SK-N-SH (cell line): ENCODE measurements at regions of chr5 and their contacts with region 1.

Region 1: DNA sequence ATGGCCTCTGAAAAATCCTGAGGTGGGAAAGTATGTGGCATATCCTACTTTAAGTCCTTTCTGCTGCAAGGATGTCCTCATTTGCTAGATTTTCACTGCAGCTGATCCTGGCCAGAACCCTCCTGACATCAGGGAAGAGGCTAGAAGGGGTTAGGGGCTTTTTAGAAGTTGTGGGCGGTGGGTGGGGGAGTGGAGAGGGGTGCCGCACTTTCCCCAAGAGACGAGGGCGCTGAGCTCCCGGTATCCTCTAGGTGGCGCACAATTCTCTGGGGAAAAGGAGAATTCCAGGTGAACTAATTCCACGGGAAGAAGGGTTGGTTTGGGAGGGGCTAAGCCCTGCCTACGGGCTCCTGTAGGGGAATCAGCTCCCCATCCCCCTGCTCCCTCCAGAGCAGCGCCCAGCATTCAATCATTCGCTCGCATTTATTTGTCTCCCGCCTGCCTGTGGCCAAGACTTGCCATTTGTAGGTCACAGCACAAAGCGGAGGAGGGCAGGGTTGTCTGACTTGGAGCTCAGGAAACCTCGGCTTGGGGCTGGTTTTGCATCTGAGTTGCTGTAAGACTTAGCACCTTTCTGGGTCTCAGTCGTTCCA is 42.9 kb upstream of the HAND1 start:
- DNase-seq: peak; percentile 48
- H3K4me3 ChIP-seq: no peak overlapping the region
- H3K27ac ChIP-seq: peak overlapping the region in 1 of 2 experiments; percentile 100; a peak in 2 of 4 replicates
- H3K4me1 ChIP-seq: peaks cover 0 to 83% of the 10 kb centered on the region in 2 experiments; a peak in 2 of 4 replicates
- H3K27me3 ChIP-seq: no peaks in the 10 kb centered on the region
- CTCF ChIP-seq: peak; percentile 77
- EP300 ChIP-seq: no peak
- RAD21 ChIP-seq: peak; percentile 70

Region 2: GRCh38 chr5:154087257-154087656 is 433.7 kb before region 1 on chr5:
- CTCF ChIA-PET with region 1: no interaction called
- POLR2A ChIA-PET with region 1: no interaction called
- DNase-seq: no peak
- H3K4me3 ChIP-seq: no peak overlapping the region
- H3K27ac ChIP-seq: no peak overlapping the region
- H3K4me1 ChIP-seq: peaks cover 0 to 18% of the 10 kb centered on the region in 2 experiments; a peak in 2 of 4 replicates
- H3K27me3 ChIP-seq: no peaks in the 10 kb centered on the region
- CTCF ChIP-seq: no peak
- EP300 ChIP-seq: no peak
- RAD21 ChIP-seq: no peak

Region 3: DNA sequence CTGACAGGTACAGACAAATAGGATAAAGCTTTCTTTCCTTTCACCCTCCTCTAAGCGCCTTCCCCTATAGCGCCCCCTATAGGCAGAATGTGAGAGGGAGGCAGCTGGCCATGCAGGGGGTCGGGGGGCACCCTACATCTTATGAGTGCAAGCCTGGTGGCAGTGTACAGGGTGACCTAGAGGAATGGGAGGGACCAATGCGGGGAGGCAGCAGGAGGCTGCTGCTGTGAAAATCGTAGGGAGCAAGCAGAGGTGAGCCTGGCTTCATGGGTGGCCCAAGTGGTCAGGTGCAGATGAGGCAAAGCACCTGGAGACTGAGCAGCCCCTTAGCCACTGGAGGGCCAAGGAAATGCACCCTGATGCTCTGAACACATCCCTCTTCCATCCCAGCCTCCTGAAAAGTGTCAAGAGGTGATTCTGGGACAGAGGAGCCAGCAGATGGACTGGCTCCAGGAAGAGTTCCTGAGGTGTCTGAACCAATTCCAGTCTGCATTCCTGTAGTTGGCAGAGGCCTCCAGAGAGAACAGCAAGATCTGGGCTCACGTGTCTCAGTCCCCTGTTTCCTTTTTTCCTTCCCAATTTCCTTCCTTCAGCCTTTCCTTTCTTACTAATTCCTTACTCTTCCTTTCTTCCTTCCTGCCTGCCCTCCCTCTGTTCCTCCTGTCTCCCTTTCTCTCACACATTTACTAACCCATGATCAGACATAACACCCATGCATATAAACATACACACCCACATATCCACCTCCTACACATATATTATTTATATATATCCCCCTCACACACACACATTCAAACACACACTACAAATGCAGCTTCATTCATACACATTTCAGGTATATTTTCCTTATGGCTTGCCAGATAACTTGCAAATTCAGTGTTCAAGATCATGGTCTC is 363.2 kb before region 1 on chr5:
- CTCF ChIA-PET with region 1: no interaction called
- POLR2A ChIA-PET with region 1: no interaction called
- DNase-seq: no peak
- H3K4me3 ChIP-seq: no peak overlapping the region; a peak in 1 of 4 replicates
- H3K27ac ChIP-seq: no peak overlapping the region
- H3K4me1 ChIP-seq: peaks cover 0 to 5% of the 10 kb centered on the region in 2 experiments; a peak in 1 of 4 replicates
- H3K27me3 ChIP-seq: no peaks in the 10 kb centered on the region
- CTCF ChIP-seq: peak; percentile 51
- EP300 ChIP-seq: no peak
- RAD21 ChIP-seq: no peak

Region 4: DNA sequence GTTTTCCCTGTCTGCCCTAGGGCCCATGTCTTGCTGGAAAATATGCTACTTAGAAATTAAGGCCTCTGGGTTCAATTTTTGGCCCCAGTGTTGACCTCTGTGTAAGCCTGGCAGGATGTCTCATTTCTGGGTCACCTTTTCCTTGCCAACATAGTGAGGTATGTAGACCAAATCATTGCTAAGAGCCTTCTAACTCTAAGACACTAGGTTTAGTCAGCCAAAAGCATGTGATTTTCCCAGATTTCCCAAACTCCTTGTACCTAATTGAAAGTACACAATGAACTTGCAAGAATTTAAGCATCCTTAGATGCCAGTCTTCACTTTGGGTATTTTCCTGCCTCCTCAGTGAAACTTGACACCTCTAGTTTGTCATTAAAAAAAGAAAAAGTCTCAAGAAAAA is 253.4 kb before region 1 on chr5:
- CTCF ChIA-PET with region 1: no interaction called
- POLR2A ChIA-PET with region 1: no interaction called
- DNase-seq: no peak
- H3K4me3 ChIP-seq: no peak overlapping the region
- H3K27ac ChIP-seq: peak overlapping the region in 1 of 2 experiments; percentile 52; a peak in 2 of 4 replicates
- H3K4me1 ChIP-seq: peaks cover 0 to 10% of the 10 kb centered on the region in 2 experiments; a peak in 1 of 4 replicates
- H3K27me3 ChIP-seq: no peaks in the 10 kb centered on the region
- CTCF ChIP-seq: no peak
- EP300 ChIP-seq: no peak
- RAD21 ChIP-seq: no peak

Region 5: GRCh38 chr5:154472871-154473580 is 47.9 kb before region 1 on chr5:
- CTCF ChIA-PET with region 1: interaction called, 295 read pairs
- POLR2A ChIA-PET with region 1: interaction called, 54 read pairs
- DNase-seq: no peak
- H3K4me3 ChIP-seq: peak overlapping the region in 1 of 2 experiments; percentile 74; a peak in 1 of 4 replicates
- H3K27ac ChIP-seq: peak overlapping the region in 1 of 2 experiments; percentile 96; a peak in 2 of 4 replicates
- H3K4me1 ChIP-seq: peaks cover 0 to 41% of the 10 kb centered on the region in 2 experiments; a peak in 2 of 4 replicates
- H3K27me3 ChIP-seq: peaks cover 45% of the 10 kb centered on the region
- CTCF ChIP-seq: no peak
- EP300 ChIP-seq: no peak
- RAD21 ChIP-seq: no peak

Region 6: GRCh38 chr5:154487541-154487940 is 33.4 kb before region 1 on chr5:
- CTCF ChIA-PET with region 1: interaction called, 93 read pairs
- POLR2A ChIA-PET with region 1: interaction called, 87 read pairs
- DNase-seq: peak; percentile 81
- H3K4me3 ChIP-seq: no peak overlapping the region
- H3K27ac ChIP-seq: peak overlapping the region in 1 of 2 experiments; percentile 100; a peak in 2 of 4 replicates
- H3K4me1 ChIP-seq: peaks cover 0 to 50% of the 10 kb centered on the region in 2 experiments; a peak in 2 of 4 replicates
- H3K27me3 ChIP-seq: peaks cover 50% of the 10 kb centered on the region
- CTCF ChIP-seq: no peak
- EP300 ChIP-seq: peak in 1 of 2 experiments; percentile 99; a peak in 2 of 4 replicates
- RAD21 ChIP-seq: peak; percentile 33; the same call in 1 of the 2 replicates

Region 7: DNA sequence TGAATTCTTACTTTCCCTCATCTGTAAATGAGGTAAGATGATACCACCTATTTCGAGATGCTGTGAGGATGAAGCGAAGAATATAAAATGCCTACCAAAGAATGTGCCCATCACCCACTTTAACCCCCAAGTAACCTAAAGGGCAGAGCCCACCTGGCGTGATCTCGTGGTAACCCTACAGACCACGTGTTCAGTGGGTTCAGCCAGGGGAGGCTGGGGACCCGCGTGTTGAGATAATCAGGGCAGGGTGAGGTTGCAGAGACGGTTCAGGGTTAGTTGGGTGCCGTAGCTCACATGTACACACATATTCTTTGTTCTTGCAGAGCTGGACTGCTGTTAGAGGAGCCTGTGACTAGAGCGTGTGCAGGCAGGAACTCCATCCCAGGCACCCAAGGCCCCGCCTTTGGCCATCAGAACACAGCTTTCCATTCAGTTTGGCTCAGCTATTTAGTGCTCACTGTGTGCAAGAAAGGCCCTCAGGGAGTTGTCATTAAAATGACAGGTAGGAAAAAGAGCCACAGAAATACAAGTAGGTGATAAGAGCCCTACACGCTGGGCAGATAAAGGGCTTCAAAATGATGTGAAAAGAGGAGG is 13.6 kb after region 1 on chr5:
- CTCF ChIA-PET with region 1: interaction called, 47 read pairs
- POLR2A ChIA-PET with region 1: no interaction called
- DNase-seq: no peak
- H3K4me3 ChIP-seq: no peak overlapping the region
- H3K27ac ChIP-seq: no peak overlapping the region
- H3K4me1 ChIP-seq: peaks cover 0 to 3% of the 10 kb centered on the region in 2 experiments; a peak in 1 of 4 replicates
- H3K27me3 ChIP-seq: no peaks in the 10 kb centered on the region
- CTCF ChIP-seq: no peak
- EP300 ChIP-seq: no peak
- RAD21 ChIP-seq: no peak

Region 8: DNA sequence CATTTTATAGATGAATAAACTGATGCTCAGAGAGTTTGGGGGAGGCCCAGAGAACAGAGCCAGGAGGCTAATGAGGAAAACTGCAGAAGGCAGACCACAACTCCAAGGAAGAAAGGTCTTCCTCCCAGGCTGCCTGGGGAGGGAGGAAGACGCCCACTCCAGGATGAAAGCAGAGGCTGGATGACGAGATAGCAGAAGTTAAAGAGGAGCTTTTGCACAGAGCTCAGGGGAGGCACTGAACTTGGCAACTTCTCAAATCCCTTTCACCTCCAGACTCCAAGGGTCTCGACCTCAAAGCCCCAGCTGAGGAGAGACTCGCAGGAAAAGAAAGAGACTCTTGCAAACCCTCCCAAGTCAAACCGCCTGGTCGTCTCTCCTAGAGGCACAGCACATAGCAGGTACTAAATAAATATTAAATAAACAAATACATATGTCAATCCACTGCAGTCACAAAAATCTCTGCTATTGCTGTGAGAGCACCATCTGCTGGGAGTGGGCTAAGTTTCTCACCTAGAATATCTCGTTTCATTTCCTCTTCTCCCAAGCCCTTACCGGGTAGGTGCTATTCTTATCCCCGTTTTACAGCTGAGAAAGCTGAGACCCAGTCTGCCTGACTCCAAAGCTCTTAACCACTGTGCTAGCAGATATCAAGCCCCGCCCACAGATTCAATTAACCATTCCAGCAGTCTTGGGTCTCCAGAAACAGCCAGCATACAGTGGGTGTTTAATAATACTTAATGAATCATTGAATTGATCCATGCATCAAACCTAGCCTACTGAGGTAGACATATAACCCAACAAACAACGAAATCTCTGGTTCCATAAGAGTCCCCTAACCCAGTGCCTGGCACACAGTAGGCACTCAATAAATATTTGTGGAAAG is 54.8 kb after region 1 on chr5:
- CTCF ChIA-PET with region 1: interaction called, 33 read pairs
- POLR2A ChIA-PET with region 1: interaction called, 5 read pairs
- DNase-seq: no peak
- H3K4me3 ChIP-seq: no peak overlapping the region
- H3K27ac ChIP-seq: no peak overlapping the region
- H3K4me1 ChIP-seq: peaks cover 0 to 14% of the 10 kb centered on the region in 2 experiments; a peak in 1 of 4 replicates
- H3K27me3 ChIP-seq: no peaks in the 10 kb centered on the region; the same call in 1 of the 2 replicates
- CTCF ChIP-seq: peak; percentile 16; the same call in 1 of the 2 replicates
- EP300 ChIP-seq: no peak
- RAD21 ChIP-seq: peak; percentile 64

Region 9: DNA sequence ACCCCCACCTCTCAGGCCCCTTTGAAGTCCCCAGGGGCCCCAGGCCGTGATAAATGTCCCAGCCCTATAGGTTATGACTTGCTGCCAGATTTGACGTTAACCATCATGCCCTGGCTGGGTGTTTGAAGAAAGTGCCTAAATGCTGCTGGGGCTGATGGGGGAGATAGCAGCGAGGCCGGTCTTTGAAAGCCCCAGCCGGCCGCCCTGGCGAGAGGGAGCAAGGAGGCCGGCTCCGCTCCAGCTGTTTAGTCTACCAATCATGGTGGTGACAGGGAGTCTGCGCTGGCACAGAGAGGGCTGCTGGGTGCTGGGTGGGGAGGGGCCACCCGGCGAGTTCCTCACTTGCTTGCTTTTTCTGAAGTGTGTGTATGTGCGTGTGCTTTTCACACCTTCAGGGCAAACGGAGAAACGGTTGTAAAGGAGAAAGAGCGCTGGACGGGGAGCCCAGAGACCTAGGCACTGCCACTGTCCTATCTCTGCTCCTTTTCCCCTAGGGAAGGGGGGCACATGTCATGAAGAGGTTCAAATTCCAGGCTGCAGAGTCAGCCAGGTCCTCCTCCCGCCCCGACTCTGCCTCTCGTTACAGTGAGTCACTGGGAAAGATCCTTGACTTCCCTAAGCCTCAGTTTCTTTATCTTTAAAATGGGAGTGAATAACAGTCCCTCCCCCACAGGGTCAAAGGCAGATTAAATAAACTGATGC is 83.2 kb after region 1 on chr5:
- CTCF ChIA-PET with region 1: interaction called, 179 read pairs
- POLR2A ChIA-PET with region 1: interaction called, 16 read pairs
- DNase-seq: peak; percentile 91
- H3K4me3 ChIP-seq: peak overlapping the region; percentile 20 to 46; a peak in 2 of 4 replicates
- H3K27ac ChIP-seq: peak overlapping the region in 1 of 2 experiments; percentile 85; a peak in 2 of 4 replicates
- H3K4me1 ChIP-seq: peaks cover 5 to 49% of the 10 kb centered on the region in 2 experiments; a peak in 2 of 4 replicates
- H3K27me3 ChIP-seq: no peaks in the 10 kb centered on the region; the same call in 1 of the 2 replicates
- CTCF ChIP-seq: no peak
- EP300 ChIP-seq: peak; percentile 15 to 98; a peak in 2 of 4 replicates
- RAD21 ChIP-seq: no peak; the same call in 1 of the 2 replicates